Left cardiac atrium (tissue), 4 donors: ENCODE measurements at regions of chr3 and their contacts with region 1.

Region 1: DNA sequence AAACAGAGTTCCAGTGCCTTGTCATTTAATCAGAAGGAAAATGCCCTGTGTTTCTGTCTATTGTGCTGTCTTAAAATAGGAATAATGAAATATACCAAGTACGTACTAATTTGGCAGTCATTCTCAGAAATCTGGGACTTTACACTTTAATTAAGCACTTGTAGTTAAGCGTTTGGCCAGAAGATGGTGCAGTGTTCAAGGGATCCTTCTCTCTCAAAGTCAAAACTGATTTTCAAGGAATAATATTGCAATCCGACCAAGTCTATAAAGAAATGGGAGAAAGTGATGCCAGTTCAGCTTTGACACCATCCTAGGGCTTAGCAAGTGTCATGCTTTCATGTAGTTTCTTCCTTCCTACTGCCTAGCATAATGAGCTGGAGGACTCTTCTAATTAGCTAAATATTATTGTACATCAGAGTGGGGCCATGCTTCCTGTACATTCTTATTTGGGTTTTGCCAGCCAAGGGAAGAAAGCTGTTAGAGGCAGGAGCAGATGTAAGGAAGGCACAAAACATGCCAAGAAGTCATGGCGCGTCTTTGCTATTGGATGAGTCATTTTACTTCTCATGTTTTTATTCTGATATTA is 64.8 kb downstream of the SAMMSON start:
- DNase-seq: no peak
- ATAC-seq: no peak

Region 2: GRCh38 chr3:70358978-70359580 is 294.8 kb after region 1 on chr3:
- intact Hi-C with region 1: loop called in 1 of 2 experiments (anchors 5 kb)
- DNase-seq: no peak
- ATAC-seq: no peak

Region 3: GRCh38 chr3:71652781-71653413 is 1588.6 kb after region 1 on chr3:
- intact Hi-C with region 1: loop called in 1 of 2 experiments (anchors 10 kb)
- DNase-seq: peak; percentile 40
- ATAC-seq: peak; percentile 53 to 84